ENCODE measurements at regions of chr19 and their contacts with region 1.

Region 1: DNA sequence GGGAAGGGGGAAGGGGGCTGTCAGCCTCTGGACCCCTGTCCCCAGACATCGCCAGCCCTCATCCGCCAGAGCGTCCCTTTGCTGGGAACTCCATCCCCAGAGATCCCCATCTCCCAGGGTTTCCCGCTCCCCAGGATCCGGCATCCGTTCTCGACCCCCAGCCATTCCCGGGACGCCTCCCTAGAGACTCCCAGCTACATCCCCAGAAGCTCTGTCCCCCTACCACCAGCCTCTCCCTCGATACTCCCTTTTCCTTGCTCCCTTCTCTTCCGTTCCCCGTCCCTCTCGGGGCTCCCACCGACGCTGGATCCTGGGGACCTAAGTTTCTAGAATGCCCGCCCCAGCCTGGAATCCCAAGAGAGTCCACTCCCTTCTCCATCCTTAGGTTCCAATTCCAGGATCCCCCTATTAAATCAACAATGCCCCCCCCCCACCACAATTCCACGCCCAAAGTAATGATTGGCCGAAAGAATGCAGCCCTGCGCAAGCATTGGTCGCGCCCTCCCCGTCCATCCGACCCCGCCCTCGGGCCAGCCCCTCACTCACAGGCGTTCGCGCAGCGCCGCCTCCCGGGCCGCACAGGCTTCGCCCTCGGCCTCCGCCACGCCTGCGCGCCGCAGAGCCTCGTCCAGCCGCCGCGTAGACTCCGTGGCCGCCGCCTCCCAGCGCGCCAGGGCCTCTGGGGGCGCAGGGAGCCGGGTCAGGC is 3.2 kb downstream of the CCDC194 start:
- DNase-seq: peak; percentile 85
- H3K4me3 ChIP-seq: peak overlapping the region; percentile 52 to 58 (median 54)
- H3K27ac ChIP-seq: no peak overlapping the region
- H3K4me1 ChIP-seq: peaks cover 15% of the 10 kb centered on the region
- H3K27me3 ChIP-seq: no peaks in the 10 kb centered on the region
- CTCF ChIP-seq: peak; percentile 54 to 76

Region 2: DNA sequence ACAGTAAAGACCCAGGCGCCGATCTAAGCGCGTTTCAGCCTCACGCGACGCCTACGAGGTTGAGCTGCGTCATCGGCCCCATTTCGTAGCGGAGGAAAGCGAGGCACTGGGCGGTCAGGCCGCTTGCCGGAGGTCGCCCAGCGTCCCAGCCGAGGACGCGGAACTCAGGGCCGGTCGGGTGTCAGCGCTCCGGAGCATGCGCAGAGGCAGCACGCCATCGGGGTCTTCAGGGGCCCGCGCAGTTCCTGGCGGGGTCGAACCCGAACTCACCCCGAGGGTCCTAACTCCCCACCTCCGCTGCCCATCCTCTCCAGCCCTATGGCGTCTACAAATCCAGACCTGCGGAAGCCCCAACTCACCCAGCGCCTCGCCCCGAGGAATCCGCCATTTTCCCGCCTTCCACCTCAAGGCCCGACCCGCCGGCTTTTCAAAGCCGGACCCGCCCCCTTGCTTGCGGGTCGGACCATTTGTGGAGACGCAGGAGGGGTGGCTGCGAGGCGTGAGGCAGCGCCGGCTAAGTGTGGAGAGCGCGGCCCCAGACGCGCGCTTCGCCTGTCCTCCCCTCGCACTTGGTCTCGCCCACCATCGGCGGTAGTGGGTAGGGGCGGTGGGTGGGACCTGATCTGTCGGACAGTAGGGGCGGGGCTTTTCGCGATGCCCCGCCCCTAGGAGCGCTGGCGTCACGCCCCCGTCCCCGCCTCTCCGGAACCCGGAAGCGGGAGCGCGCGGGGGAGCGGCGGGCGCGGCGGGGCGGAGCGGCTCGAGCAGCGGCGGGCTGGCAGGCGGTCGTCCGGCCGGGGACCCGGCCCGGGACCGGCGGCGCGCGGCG is 315.6 kb before region 1 on chr19 and contains the starts of genes HAUS8 and MYO9B:
- CTCF ChIA-PET with region 1: no interaction called
- dilution Hi-C with region 1: no loop called
- in situ Hi-C with region 1: loop called in 1 of 2 experiments (anchors 10 kb)
- intact Hi-C with region 1: loop called (anchors 5 kb)
- DNase-seq: peak; percentile 99
- H3K4me3 ChIP-seq: peak within 1 kb of the TSS; percentile 78 to 92 (median 85)
- H3K27ac ChIP-seq: peak within 1 kb of the TSS; percentile 84
- H3K4me1 ChIP-seq: peaks cover 28% of the 10 kb centered on the region
- H3K27me3 ChIP-seq: no peaks in the 10 kb centered on the region
- CTCF ChIP-seq: no peak
- total RNA-seq, gene HAUS8: 1.2 to 12.5 TPM
- total RNA-seq, gene MYO9B: 61.2 to 64.5 TPM

Region 3: GRCh38 chr19:17205237-17206140 is 185.3 kb before region 1 on chr19:
- CTCF ChIA-PET with region 1: no interaction called
- dilution Hi-C with region 1: no loop called
- in situ Hi-C with region 1: no loop called
- intact Hi-C with region 1: loop called (anchors 5 kb)
- DNase-seq: peak; percentile 23
- H3K4me3 ChIP-seq: no peak overlapping the region
- H3K27ac ChIP-seq: no peak overlapping the region
- H3K4me1 ChIP-seq: peaks cover 4% of the 10 kb centered on the region
- H3K27me3 ChIP-seq: no peaks in the 10 kb centered on the region
- CTCF ChIP-seq: peak; percentile 60 to 73

Region 4: DNA sequence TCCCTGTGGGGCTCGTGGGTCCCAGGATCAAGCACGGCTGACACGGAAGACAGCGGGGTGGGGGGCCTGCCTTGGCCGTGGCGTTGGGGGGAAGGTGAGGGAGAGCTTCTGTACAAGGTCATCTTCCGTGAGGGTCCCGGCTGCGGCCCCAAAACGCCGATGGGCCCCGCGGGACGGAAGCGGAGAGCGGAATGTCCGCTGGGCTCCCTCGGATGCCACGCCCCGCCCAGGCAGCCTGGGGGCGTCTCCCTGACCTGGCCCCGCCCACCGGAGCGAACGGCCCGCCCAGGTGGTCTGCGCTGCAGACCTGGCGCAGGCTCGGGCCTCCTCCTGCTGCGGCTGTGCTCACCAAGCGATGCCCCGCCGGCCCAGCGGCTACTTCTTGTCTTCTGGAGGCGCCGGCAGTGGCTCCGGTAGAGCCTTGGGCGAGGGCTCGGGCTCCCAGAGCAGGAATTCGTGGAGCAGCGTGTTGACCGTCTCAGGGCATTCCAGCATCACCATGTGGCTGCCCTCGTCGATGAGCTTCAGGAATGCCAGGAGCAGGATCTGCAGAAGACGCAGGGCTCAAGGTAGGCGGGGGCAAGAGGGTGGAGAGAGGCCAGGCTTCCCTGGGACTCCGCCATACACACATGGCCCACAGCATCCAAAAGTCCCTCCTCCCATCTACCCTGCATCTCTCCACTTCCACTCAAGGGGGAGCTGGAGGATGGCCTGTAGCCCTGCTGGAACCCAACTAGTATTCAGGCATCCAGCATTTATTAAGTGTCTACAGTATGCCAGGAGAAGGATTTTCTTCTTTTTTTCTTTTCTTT is 98.3 kb before region 1 on chr19:
- CTCF ChIA-PET with region 1: no interaction called
- dilution Hi-C with region 1: no loop called
- in situ Hi-C with region 1: loop called (anchors 5 kb)
- intact Hi-C with region 1: loop called (anchors 1 kb)
- DNase-seq: peak; percentile 87
- H3K4me3 ChIP-seq: peak overlapping the region; percentile 46 to 65 (median 59)
- H3K27ac ChIP-seq: no peak overlapping the region
- H3K4me1 ChIP-seq: peaks cover 30% of the 10 kb centered on the region
- H3K27me3 ChIP-seq: no peaks in the 10 kb centered on the region
- CTCF ChIP-seq: peak; percentile 87 to 94

Region 5: GRCh38 chr19:17346109-17346671 is 44.6 kb before region 1 on chr19:
- CTCF ChIA-PET with region 1: no interaction called
- dilution Hi-C with region 1: no loop called
- in situ Hi-C with region 1: loop called in 1 of 2 experiments (anchors 5 kb)
- intact Hi-C with region 1: loop called (anchors 1 kb)
- DNase-seq: peak; percentile 51
- H3K4me3 ChIP-seq: no peak overlapping the region
- H3K27ac ChIP-seq: no peak overlapping the region
- H3K4me1 ChIP-seq: peaks cover 7% of the 10 kb centered on the region
- H3K27me3 ChIP-seq: no peaks in the 10 kb centered on the region
- CTCF ChIP-seq: peak; percentile 78 to 94

Region 6: DNA sequence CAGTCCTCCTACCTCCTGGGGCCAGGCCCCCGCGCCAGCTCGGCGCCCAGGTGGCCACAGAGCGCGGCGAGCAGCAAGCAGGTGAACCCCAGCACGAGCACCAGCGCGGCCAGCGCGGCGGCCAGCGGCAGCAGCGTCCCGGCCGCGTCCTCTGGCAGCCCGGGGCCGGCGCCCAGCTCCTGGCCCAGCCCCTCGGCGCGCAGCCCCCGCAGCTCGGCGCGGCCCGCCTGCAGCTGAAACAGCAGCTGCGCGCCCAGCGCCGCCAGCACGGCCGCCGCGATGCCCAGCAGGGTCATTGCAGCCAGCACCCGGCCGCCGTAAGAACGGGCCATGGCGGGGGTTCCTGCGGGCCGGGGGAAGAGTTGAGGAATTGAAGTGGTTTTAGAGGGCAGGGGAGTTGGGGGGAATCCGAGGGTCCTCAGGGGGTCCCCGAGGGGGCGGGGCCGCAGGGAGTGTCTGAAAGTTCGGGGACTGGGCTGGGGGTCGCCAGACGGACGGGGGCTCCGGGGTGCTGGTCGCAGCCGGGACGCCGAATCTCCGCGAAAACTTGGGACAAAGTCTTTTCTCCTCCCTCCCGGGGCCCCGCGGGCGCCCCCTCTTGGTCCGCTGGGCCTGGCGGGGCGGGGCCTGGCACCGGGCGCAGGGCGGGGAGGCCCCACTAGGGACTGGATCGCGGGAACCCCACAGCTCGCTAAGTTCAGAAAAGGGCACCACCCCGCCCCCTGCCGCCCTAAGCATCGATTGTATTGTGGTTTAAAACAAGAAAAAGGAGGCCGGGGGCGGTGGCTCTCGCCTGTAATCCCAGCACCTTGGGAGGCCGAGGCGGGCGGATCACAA is 57.5 kb after region 1 on chr19 and contains the start of gene TMEM221:
- CTCF ChIA-PET with region 1: no interaction called
- dilution Hi-C with region 1: no loop called
- in situ Hi-C with region 1: no loop called
- intact Hi-C with region 1: loop called (anchors 5 kb)
- DNase-seq: no peak
- H3K4me3 ChIP-seq: peak within 1 kb of the TSS; percentile 37 to 46 (median 43)
- H3K27ac ChIP-seq: no peak within 1 kb of the TSS
- H3K4me1 ChIP-seq: peaks cover 8% of the 10 kb centered on the region
- H3K27me3 ChIP-seq: no peaks in the 10 kb centered on the region
- CTCF ChIP-seq: peak in 1 of 2 donors; percentile 58
- total RNA-seq, gene TMEM221: 0.17 to 1.4 TPM

Region 7: GRCh38 chr19:17766543-17767131 is 375.8 kb after region 1 on chr19:
- CTCF ChIA-PET with region 1: no interaction called
- dilution Hi-C with region 1: no loop called
- in situ Hi-C with region 1: no loop called
- intact Hi-C with region 1: loop called (anchors 2 kb)
- DNase-seq: peak; percentile 68
- H3K4me3 ChIP-seq: peak overlapping the region; percentile 1 to 49 (median 40)
- H3K27ac ChIP-seq: no peak overlapping the region
- H3K4me1 ChIP-seq: peaks cover 5% of the 10 kb centered on the region
- H3K27me3 ChIP-seq: no peaks in the 10 kb centered on the region
- CTCF ChIP-seq: peak; percentile 86 to 99

Measured in mammary epithelial cell (primary cell).